Activated CD4-positive, alpha-beta T cell treated with anti-CD3 and anti-CD28 coated beads for 36 hours (primary cell): ENCODE measurements at regions of chr18 and their contacts with region 1.

Region 1: GRCh38 chr18:59899298-59900221 is at the start of gene PMAIP1:
- DNase-seq: peak; percentile 92
- ATAC-seq: peak; percentile 65
- H3K4me3 Mint-ChIP-seq: peak within 1 kb of the TSS; percentile 86
- H3K27ac Mint-ChIP-seq: peak within 1 kb of the TSS; percentile 95
- H3K4me1 Mint-ChIP-seq: peaks cover 31% of the 10 kb centered on the region
- H3K27me3 Mint-ChIP-seq: no peaks in the 10 kb centered on the region
- total RNA-seq, gene PMAIP1: 58.7 to 97.2 TPM

Region 2: DNA sequence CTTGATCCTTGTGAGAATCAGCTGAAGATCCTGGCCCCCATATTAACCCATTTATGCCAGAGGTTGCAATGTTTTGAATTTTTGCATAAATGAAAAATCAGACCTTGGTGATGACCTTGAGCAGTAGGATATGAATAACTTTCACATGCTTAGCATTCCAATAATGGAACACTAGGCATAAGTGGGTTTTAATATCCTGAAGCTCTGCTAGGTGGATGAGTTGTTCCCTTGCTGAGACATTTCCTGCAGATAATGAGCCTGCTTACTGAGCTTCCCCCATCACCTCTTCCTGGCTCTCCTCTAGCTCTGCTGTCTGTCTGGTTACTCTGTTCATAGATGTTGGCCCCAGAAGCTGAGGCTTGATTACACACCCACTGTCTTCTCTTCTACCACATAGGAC is 785.4 kb before region 1 on chr18:
- CTCF ChIA-PET with region 1: no interaction called
- POLR2A ChIA-PET with region 1: no interaction called
- intact Hi-C with region 1: no loop called
- DNase-seq: no peak
- ATAC-seq: no peak
- H3K4me3 Mint-ChIP-seq: no peak overlapping the region
- H3K27ac Mint-ChIP-seq: no peak overlapping the region
- H3K4me1 Mint-ChIP-seq: no peaks in the 10 kb centered on the region
- H3K27me3 Mint-ChIP-seq: peaks cover 45% of the 10 kb centered on the region

Region 3: GRCh38 chr18:59139371-59140298 is 759.9 kb before region 1 on chr18 and contains the start of gene SEC11C:
- CTCF ChIA-PET with region 1: no interaction called
- POLR2A ChIA-PET with region 1: interaction called, 6 read pairs
- intact Hi-C with region 1: loop called (anchors 1 to 5 kb)
- DNase-seq: peak; percentile 97
- ATAC-seq: peak; percentile 94
- H3K4me3 Mint-ChIP-seq: peak within 1 kb of the TSS; percentile 94
- H3K27ac Mint-ChIP-seq: peak within 1 kb of the TSS; percentile 95
- H3K4me1 Mint-ChIP-seq: peaks cover 42% of the 10 kb centered on the region
- H3K27me3 Mint-ChIP-seq: peaks cover 8% of the 10 kb centered on the region
- total RNA-seq, gene SEC11C: 53.5 to 70.2 TPM

Region 4: DNA sequence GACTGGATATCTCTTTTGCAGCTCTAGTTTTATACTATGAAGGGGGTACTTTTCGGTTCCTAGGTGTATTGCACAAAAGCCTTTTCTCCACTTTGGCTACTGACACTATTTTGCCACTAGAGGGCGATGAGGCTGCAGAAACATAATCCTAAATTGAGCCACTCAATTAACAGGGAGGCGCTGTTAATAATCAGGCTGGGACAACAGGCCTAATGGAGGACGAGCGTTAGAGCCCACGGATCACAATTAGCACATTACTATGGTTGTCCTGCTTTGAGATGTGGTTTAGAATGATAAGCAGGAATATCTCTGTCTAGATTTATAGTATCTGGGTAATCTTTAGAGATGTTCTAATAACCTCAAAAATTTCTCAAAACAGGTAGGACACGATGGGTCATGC is 62.0 kb before region 1 on chr18:
- CTCF ChIA-PET with region 1: interaction called, 5 read pairs
- POLR2A ChIA-PET with region 1: interaction called, 5 read pairs
- intact Hi-C with region 1: loop called (anchors 2 kb)
- DNase-seq: peak; percentile 56
- ATAC-seq: peak; percentile 60
- H3K4me3 Mint-ChIP-seq: no peak overlapping the region
- H3K27ac Mint-ChIP-seq: no peak overlapping the region
- H3K4me1 Mint-ChIP-seq: peaks cover 10% of the 10 kb centered on the region
- H3K27me3 Mint-ChIP-seq: peaks cover 5% of the 10 kb centered on the region

Region 5: DNA sequence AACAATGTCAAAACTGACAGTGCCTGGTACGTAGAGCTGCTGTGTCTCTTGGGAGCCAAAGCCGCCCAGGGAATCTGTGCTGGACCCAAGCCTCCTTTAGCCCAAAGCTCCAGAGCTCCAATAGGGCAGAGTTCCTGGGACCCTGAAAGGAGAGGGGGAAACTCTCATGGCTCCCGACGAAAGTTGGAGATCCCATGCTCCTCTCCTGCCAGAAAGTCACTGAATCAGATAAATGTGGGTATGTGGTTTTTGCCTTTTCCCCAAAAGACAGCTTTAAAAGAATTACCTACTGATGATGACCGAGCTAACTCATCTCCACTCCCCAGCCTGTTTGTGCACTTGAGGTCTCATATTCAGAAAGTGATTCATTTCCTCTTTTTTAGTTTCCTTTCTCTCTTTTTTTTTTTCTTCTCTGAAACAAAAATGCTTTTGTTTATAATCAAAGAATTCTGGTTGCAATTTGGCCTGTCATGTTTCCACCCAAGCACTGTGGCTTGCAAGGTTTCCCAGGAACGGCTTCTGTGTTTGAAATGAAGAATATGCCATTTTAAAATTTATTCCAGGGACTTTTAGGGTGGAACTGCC is 13.9 kb before region 1 on chr18:
- CTCF ChIA-PET with region 1: interaction called, 6 read pairs
- POLR2A ChIA-PET with region 1: interaction called, 34 read pairs
- intact Hi-C with region 1: loop called (anchors 1 kb)
- DNase-seq: peak; percentile 56
- ATAC-seq: peak; percentile 79
- H3K4me3 Mint-ChIP-seq: peak overlapping the region; percentile 26
- H3K27ac Mint-ChIP-seq: peak overlapping the region; percentile 74
- H3K4me1 Mint-ChIP-seq: peaks cover 39% of the 10 kb centered on the region
- H3K27me3 Mint-ChIP-seq: no peaks in the 10 kb centered on the region

Region 6: DNA sequence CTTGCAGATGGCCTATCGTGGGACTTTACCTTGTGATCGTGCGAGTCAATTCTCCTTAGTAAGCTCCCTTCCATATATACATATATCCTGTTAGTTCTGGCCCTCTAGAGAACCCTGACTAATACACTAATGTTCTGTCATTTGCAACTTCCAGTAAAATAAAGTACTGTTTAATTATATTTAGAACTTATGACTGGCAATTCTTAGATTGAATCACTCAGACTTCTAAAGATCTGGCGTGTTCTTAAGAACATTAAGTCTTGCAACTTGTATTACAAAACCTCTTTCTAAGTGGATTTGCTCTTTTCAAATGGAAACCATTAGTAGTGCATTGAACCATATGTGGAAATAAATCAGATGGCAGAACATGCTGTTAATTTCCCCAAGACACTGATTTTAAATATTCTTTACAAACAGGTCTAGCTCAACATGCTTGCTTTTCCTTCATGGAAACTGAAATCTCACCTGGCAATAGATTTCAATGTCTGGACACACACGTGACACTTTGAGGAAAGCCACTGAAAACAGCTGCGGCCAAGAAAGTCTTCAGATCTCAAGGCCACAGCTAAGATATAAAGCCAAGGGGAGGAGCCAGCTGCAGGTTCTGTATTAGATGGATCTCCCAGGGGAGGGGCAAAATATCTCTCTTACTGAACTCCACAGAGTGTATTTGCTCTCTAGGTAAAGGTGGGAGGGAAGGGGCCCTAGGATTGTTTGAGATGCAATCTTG is 50.8 kb after region 1 on chr18:
- CTCF ChIA-PET with region 1: interaction called, 3 read pairs
- POLR2A ChIA-PET with region 1: interaction called, 35 read pairs
- intact Hi-C with region 1: loop called (anchors 1 kb)
- DNase-seq: peak; percentile 18
- ATAC-seq: peak; percentile 61
- H3K4me3 Mint-ChIP-seq: no peak overlapping the region
- H3K27ac Mint-ChIP-seq: no peak overlapping the region
- H3K4me1 Mint-ChIP-seq: peaks cover 38% of the 10 kb centered on the region
- H3K27me3 Mint-ChIP-seq: peaks cover 2% of the 10 kb centered on the region

Region 7: GRCh38 chr18:59966913-59967312 is 67.4 kb after region 1 on chr18:
- CTCF ChIA-PET with region 1: no interaction called
- POLR2A ChIA-PET with region 1: no interaction called
- intact Hi-C with region 1: no loop called
- DNase-seq: no peak
- ATAC-seq: no peak
- H3K4me3 Mint-ChIP-seq: no peak overlapping the region
- H3K27ac Mint-ChIP-seq: no peak overlapping the region
- H3K4me1 Mint-ChIP-seq: peaks cover 4% of the 10 kb centered on the region
- H3K27me3 Mint-ChIP-seq: peaks cover 21% of the 10 kb centered on the region